Right ventricle myocardium inferior (tissue), 1 donor: ENCODE measurements at regions of chr1 and their contacts with region 1.

Region 1: DNA sequence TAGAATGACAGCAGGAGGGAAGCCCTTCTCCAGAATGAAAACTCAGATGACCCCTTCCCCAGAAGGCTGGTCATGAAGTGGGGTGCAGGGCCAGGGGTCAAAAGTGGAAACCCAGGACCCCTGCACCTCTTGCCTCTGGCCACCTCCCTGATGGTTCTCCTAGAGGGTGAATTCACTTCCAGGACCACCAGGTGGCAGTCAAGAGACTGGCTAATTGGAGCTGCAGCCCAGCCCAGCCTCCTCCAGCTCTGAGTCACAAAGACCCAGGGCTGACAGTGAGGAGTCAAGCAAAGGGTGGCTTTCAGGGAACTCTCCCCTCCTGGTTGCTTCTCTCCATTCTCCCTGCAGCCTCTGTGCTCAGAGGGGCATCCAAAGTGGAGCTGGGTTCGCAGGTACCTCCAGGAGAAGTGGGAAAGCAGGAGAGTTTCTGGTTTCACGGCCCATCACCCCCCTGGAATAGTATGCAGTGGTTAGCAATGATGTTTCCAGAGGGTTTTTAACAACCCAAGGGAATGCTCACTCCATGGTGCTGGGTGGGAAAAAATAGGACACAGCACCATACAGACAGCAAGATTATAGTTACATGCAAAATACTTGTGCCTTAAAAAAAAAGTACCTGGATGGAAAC is 6.1 kb upstream of the EPHB2 start:
- DNase-seq: peak; percentile 84
- ATAC-seq: peak; percentile 87

Region 2: DNA sequence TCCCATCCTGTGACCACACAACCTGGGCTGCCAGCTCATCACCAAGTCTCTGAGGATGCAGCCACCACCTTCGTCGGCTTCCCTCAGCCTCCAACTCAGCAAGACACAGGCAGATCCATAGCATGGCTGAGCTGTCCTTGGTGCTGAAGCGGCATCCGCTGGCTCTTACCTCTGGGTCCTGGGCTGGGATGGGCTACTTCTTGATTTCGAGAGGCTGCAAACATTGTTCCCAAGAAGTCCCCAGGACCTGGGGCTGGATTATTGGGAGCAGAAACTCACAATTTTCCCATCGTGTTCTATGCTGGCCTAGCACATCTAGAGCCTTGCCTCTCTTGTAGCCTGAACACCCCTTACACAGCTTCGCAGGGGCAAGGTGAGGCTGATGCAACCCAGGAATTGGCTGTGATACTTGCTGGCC is 93.0 kb before region 1 on chr1:
- intact Hi-C with region 1: no loop called
- DNase-seq: no peak
- ATAC-seq: no peak

Region 3: DNA sequence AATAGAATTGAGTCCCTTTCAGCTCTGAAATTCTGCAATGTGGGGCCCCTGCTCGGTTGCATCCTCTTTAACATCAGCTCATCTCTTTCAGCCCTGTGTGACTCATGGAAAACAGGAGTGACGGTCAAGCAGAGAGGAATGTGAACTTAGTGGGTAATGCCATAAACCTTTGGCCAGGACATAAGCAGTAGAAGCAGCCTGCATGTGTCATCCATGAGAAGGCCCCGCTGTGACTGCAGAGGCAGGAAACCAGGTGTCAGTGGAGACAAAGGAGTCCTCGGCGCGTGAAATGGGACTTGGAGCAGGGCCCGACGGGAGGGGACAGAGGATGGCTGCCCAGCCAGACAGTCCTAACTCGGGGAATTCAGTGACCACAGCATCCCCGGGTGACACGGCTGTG is 15.0 kb before region 1 on chr1:
- intact Hi-C with region 1: no loop called
- DNase-seq: no peak
- ATAC-seq: no peak

Region 4: DNA sequence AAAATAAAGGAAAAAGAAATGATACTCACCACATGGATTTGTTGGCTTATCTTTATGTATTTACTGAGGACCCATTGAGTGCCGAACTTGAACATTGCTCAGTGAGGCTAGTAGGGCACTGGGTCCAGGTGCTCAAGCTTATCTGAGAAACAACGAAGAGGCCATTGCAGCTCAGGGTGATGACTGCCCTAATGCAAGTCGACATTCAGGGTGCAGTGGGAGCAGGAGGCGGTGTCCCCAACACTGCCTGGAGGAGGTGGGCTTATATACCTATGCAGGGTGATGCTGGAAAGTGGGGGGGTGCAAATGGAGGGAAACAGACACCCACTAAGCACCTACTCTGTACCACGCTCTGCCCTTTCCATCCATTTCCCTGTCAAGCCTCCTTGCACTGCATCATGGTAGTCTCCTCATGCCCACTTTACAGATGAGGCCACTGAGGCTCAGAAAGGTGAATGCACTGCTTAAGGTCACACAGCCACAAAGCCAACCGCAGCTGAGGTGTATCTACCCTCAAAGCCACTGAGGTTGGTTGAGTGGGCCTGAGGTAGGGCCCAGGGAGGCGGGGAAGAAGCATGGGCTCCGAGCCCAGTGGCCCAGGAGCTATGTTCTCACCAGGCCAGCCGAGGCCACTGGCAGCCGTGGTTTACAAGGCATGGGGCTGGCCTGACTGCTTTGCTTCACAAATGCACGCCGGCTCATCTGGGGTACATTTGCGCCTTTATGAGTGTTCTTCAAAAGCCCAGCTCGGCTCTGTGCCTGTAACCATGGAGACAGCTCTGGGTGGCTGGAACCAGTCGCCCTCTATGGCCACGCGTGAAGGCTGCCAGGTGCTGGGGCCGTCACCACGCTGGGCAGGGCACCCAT is 109.9 kb after region 1 on chr1:
- intact Hi-C with region 1: loop called (anchors 10 kb)
- DNase-seq: no peak
- ATAC-seq: no peak

Region 5: DNA sequence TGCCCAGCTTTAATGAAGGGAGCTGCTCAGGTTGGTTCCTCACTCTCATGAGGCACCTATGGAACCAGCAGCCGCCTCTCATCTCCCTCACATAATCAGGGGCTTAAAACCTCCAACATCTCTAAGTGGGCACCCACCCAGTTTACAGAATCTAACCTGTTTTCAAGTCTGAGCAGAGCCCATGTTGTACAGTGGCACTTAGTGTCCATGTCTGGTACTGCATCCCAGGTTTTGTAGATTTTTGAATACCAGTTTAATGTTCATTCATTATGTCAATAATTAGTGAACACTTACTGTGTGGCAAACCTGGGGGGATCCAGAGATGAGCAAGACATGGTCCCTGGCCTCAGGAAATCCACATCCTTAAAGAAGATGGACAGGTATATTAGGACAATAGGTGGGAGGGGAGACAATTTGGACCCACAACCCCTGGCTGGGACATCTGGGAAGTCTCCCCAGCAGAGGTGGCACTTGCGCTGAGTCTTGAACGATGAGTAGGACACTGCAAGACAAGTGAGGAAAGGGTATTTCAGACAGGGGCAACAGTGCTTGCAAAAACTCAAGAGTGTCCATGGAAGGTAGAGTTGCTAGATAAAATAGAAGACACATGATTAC is 184.8 kb after region 1 on chr1:
- intact Hi-C with region 1: loop called (anchors 2 kb)
- DNase-seq: peak; percentile 2
- ATAC-seq: peak; percentile 44

Region 6: GRCh38 chr1:22930235-22930912 is 225.8 kb after region 1 on chr1:
- intact Hi-C with region 1: loop called (anchors 2 kb)
- DNase-seq: no peak
- ATAC-seq: peak; percentile 72